HEK293T (cell line): ENCODE measurements at regions of chr20 and their contacts with region 1.

Region 1: DNA sequence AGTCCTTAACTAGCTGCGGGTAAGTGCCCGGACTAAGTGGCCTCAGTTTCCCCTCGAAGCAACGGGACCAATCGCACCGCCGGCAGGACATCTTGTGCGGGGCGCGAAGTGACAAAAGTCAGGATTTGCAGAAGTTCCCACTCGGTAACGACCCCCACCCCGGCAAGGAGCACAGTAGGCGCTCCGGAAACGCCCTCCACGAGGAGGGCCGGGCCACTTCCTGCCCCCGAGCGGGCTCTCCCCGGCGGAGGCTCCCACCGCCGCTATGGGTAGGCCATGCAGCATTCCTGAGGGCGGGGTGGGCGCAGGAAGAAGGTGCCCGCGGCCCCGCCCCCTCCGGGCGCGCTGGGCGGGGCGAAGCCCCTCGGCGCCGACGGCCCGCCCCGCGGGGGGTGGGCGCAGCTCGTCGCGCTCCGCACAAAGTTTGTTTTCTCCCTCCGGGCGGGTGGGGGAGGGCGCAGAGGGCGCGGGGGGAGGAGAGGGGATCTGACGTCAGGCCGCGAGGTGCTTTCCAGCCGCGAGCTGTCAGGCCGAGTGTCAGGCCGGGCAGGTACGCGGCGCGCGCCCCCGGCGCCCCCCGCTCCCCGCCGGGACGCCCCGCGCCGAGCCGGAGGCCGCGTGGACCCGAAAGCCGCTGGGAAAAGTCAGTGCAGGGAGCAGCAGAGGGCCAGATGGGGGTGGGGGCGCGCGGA is at the start of gene TGIF2:
- DNase-seq: peak; percentile 97

Region 2: GRCh38 chr20:36585463-36586108 is 12.3 kb after region 1 on chr20:
- CTCF ChIA-PET with region 1: interaction called, 3 read pairs
- POLR2A ChIA-PET with region 1: interaction called, 15 read pairs
- DNase-seq: no peak

Region 3: DNA sequence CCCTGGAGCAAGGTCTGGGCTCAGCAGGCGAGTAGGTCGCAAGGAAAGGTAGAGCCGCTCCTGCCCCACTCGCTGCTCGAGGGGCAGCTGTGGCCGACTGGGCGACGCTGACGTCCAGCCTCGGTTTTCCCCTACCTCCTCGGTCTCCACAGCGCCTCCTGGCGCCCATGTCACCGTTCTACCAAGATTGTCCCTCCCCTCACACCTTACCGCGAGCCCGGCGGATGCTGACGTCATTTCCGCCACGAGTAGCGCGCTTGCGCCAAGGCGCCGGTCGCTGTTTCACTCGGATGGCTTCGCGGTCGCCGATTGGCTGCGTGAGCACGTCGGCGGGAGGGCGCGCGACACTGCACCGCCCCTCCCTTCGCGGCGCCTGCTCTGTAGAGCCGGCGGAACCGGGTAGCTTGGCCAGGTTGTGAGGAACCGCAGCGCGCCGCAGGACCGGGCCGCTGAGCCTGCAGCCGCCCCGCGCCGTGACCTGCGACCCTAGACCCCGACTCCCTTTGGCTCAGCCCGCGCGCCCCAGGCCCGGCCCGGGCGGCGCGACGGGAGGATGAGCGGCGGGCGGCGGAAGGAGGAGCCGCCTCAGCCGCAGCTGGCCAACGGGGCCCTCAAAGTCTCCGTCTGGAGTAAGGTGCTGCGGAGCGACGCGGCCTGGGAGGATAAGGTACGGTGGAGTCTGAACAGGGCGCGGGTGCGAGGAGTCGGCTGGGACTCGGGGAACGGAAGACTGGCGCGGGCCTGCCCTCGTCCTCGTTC is 32.3 kb after region 1 on chr20 and contains the start of gene RAB5IF:
- CTCF ChIA-PET with region 1: no interaction called
- POLR2A ChIA-PET with region 1: interaction called, 29 read pairs
- DNase-seq: peak; percentile 98

Region 4: DNA sequence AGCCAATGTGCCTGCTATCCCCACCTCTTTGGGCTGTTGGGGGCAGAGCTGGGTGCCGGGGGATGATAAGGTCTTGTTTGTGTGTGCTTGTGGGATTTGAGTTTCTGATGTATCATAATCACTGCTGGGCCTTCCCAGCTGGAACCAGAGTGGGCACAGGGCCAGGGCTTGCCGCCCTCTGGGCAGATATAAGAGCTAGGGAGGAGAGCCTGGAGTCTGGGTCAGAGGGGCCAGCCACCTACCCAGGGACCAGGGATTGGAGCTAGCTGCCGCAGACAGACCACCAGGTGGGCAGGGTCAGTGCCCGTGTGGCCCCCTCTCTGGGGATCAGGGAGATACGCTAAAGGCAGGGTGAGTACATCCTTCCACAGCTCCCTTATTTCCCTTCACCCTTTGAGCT is 299.6 kb after region 1 on chr20:
- CTCF ChIA-PET with region 1: no interaction called
- POLR2A ChIA-PET with region 1: no interaction called
- DNase-seq: no peak